Activated T-helper 1 cell treated with anti-CD3 and anti-CD28 coated beads, Interleukin-12 subunit alpha, Interleukin-12 subunit beta, Interleukin-2, Interleukin-4 antibody, amounts not matched to agents 30 ng/mL and 10 ng/mL and 1 ng/mL, durations not matched to agents 14 hours and 24 hours and 36 hours (primary cell): ENCODE measurements at regions of chr2 and their contacts with region 1.

Region 1: GRCh38 chr2:141835103-141835502 is 295.7 kb downstream of the LRP1B start:
- DNase-seq: no peak
- H3K4me3 Mint-ChIP-seq: no peak overlapping the region
- H3K27ac Mint-ChIP-seq: no peak overlapping the region
- H3K4me1 Mint-ChIP-seq: no peaks in the 10 kb centered on the region
- H3K27me3 Mint-ChIP-seq: no peaks in the 10 kb centered on the region

Region 2: DNA sequence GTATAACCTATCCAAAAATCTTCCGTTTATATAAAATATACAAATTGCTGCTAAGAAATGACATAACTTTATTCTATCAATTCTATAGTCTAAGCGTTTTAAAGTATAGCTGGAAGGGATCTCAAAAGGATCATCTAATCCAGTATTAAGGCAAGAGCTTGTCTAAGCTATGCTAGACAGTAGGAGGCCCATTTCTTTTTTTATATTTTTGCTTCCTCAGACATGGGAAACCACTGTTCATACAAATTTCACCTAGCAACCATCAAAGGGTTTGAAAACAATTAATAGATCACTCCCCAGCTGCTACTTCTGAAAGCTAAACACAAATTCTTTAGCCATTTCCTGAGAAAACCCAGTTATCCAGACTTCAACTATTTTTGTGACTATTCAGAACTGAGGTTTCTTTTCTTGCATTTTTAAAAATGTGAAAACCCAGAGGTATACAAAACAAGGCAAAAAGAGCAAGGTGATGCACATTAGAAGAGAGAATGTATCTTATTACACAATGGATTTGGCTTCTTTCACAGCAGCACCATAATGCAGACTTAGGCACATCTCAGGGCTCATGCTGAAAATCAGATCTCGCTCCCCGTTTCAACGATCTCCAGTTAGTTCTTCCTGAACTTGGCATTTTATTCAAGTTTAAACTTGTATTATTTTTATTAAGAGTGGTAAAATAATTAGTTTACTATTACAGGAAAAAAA is 21.3 kb after region 1 on chr2:
- intact Hi-C with region 1: loop called (anchors 2 kb)
- DNase-seq: no peak
- H3K4me3 Mint-ChIP-seq: no peak overlapping the region
- H3K27ac Mint-ChIP-seq: no peak overlapping the region
- H3K4me1 Mint-ChIP-seq: no peaks in the 10 kb centered on the region
- H3K27me3 Mint-ChIP-seq: no peaks in the 10 kb centered on the region